ENCODE measurements at regions of chr13 and their contacts with region 1.

Region 1: GRCh38 chr13:45310341-45311125 is 30.4 kb downstream of the TPT1 start:
- DNase-seq: no peak
- H3K4me3 Mint-ChIP-seq: peak overlapping the region; percentile 79
- H3K27ac Mint-ChIP-seq: no peak overlapping the region
- H3K4me1 Mint-ChIP-seq: peaks cover 20% of the 10 kb centered on the region
- H3K27me3 Mint-ChIP-seq: peaks cover 8% of the 10 kb centered on the region

Region 2: GRCh38 chr13:44484562-44485138 is 825.9 kb before region 1 on chr13:
- CTCF ChIA-PET with region 1: no interaction called
- intact Hi-C with region 1: loop called (anchors 5 kb)
- DNase-seq: no peak
- H3K4me3 Mint-ChIP-seq: peak overlapping the region; percentile 50
- H3K27ac Mint-ChIP-seq: no peak overlapping the region
- H3K4me1 Mint-ChIP-seq: peaks cover 9% of the 10 kb centered on the region
- H3K27me3 Mint-ChIP-seq: no peaks in the 10 kb centered on the region

Region 3: GRCh38 chr13:44988973-44989817 is 321.3 kb before region 1 on chr13 and contains the starts of genes GPALPP1 and NUFIP1:
- CTCF ChIA-PET with region 1: no interaction called
- intact Hi-C with region 1: loop called (anchors 1 kb)
- DNase-seq: peak; percentile 98
- H3K4me3 Mint-ChIP-seq: peak within 1 kb of the TSS; percentile 98
- H3K27ac Mint-ChIP-seq: peak within 1 kb of the TSS; percentile 88
- H3K4me1 Mint-ChIP-seq: peaks cover 60% of the 10 kb centered on the region
- H3K27me3 Mint-ChIP-seq: no peaks in the 10 kb centered on the region
- total RNA-seq, gene GPALPP1: 25.0 to 26.9 TPM
- total RNA-seq, gene NUFIP1: 7.2 to 8.9 TPM

Region 4: GRCh38 chr13:45119991-45120864 is 190.3 kb before region 1 on chr13 and contains the start of gene GTF2F2:
- CTCF ChIA-PET with region 1: interaction called, 3 read pairs
- intact Hi-C with region 1: loop called (anchors 1 kb)
- DNase-seq: peak; percentile 88
- H3K4me3 Mint-ChIP-seq: no peak within 1 kb of the TSS
- H3K27ac Mint-ChIP-seq: no peak within 1 kb of the TSS
- H3K4me1 Mint-ChIP-seq: peaks cover 9% of the 10 kb centered on the region
- H3K27me3 Mint-ChIP-seq: no peaks in the 10 kb centered on the region
- total RNA-seq, gene GTF2F2: 21.3 to 22.4 TPM

Region 5: DNA sequence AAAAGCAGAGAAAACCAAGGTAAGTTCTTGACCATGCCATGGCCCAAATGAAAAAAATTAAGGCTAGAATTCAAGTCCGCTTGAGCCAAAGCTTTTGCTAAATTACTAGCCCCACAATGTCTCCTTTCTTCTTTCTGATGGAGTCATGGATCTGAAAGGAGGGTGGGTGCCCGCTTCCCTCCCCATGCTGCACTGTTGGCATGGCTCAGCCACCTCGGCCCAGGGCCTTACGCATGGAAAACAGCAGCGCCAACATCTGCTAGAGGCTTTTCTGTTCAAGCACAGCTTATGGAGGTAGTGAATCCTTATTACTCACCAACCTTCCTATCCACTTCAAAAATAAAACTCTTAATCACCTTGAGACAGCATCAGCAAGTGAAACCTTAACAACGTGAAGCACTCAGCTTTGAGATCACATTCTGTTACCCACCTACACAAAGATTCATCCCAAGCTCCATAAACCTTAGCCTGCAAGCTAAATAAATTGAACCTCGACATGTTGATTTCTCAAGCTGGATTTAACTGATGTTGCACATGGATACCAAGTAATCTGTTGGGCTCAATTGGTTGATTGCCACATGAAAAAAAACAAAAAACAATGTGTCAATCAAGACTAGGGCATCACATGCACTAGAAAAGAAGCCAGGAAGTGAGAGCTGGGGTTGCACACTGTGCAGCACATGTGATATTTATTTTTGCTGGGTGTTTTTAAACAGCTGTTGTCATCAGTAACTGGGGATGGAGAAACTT is 12.9 kb before region 1 on chr13:
- CTCF ChIA-PET with region 1: interaction called, 26 read pairs
- intact Hi-C with region 1: no loop called
- DNase-seq: peak; percentile 49
- H3K4me3 Mint-ChIP-seq: no peak overlapping the region
- H3K27ac Mint-ChIP-seq: peak overlapping the region; percentile 84
- H3K4me1 Mint-ChIP-seq: peaks cover 39% of the 10 kb centered on the region
- H3K27me3 Mint-ChIP-seq: peaks cover 2% of the 10 kb centered on the region

Region 6: GRCh38 chr13:45367358-45367757 is 56.8 kb after region 1 on chr13:
- CTCF ChIA-PET with region 1: no interaction called
- intact Hi-C with region 1: loop called (anchors 1 kb)
- DNase-seq: peak; percentile 97
- H3K4me3 Mint-ChIP-seq: peak overlapping the region; percentile 32
- H3K27ac Mint-ChIP-seq: peak overlapping the region; percentile 87
- H3K4me1 Mint-ChIP-seq: peaks cover 57% of the 10 kb centered on the region
- H3K27me3 Mint-ChIP-seq: no peaks in the 10 kb centered on the region